Activated naive CD4-positive, alpha-beta T cell treated with anti-CD3 and anti-CD28 coated beads for 36 hours (primary cell): ENCODE measurements at regions of chr13 and their contacts with region 1.

Region 1: DNA sequence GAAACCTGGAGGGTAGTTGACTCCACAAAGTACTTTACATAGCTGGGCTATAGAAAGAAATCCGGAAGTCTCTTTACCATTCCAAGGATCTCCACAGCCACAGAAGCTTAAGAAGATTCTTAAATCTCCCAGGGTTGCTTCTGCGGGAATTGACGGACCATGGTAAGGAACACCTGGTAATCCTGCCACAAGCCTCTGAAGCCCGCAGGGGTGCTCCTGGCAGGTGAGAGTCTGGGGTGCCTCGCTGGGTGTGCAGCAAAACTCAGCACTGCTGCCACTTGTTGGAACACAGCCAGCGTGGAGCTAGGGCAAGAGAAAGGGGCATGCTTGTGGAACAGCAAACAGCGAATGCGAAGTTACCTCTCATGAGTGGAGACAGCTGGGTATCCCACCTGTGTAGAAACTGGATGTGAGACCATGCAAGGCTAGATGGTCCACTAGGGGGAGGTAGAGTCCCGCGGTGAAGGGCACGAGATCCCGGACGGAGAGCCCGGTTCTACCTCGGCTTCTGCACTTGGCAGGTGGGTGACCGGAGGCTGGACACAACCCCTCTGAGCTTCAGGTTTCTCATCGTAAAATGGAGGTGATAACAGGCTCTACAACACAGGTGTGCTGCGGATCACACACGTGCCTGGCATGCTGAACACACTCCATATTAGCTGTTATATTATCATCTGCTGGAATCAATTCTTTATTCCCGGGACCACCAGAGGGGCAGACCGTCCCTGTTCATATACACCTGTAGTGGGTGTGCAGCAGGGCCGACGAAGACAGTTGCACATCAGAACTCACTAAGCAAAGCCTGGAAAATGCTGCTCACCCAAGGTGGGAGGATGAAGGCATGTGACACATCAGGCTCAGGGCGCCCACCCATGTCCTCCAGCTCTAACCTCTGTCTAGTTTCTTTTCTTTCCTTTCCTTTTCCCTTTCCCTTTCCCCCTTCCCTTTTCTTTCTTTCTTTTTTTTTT is 24.1 kb upstream of the UBAC2 start:
- DNase-seq: peak; percentile 87
- H3K4me3 Mint-ChIP-seq: peak overlapping the region; percentile 48
- H3K27ac Mint-ChIP-seq: no peak overlapping the region
- H3K4me1 Mint-ChIP-seq: peaks cover 35% of the 10 kb centered on the region
- H3K27me3 Mint-ChIP-seq: no peaks in the 10 kb centered on the region

Region 2: DNA sequence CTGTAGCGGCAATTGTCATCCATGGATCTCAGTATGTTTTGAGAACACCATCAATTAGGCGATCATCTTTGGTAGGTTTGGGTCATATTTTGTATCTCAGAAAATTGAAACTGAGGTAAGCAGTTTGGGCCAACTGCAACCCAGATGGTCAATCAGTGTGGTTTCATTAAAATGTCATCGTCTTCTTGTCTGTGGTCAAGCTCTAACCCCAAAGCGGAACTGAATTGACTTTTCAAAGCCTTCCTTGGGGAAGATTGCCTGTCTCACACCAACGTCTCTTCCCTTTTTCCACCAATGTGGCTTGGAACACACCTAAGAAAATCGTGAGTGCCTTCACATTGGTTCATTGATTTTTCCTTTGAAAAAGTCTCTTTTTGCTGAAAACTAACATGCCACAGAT is 32.3 kb before region 1 on chr13:
- CTCF ChIA-PET with region 1: no interaction called
- intact Hi-C with region 1: no loop called
- DNase-seq: no peak
- H3K4me3 Mint-ChIP-seq: no peak overlapping the region
- H3K27ac Mint-ChIP-seq: no peak overlapping the region
- H3K4me1 Mint-ChIP-seq: no peaks in the 10 kb centered on the region
- H3K27me3 Mint-ChIP-seq: no peaks in the 10 kb centered on the region

Region 3: DNA sequence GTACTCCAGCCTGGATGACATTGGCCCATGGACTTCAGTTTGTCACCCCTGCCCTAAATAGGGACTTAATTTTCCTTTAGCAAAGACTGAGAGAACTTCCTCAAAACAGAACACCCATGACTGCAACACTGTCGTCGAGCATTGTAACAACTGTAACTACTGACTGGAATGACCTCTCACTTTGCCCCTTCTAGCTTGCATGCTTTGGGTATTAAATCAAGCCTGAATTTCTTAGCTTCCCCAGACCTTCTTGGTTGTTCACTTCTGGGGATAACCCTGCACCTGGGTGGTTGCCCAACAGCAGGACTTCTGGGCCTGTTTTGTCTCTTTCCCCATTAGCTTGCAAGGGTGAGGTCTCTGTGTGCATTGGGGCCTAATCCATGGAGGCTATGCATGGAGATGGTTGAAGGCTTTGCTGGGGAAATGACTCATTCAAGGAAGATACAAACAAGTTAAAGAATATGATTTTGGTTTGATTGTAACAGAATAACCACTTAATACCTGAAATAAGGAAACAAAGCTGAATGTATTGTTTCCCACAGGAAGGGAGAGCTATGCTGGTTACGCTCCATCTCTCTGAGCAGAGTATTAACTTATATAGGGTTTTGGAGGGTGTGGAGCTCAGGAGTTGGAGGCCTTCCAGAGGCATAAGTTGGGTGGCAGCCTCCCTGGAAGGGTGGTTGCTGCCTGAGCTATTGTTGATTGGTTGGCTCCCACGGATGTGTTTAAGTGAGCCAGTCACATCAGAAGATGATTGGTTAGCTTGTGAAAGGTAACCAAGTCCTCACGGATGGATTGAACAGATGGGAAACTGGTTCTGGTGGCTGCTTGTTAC is 10.6 kb before region 1 on chr13:
- CTCF ChIA-PET with region 1: interaction called, 10 read pairs
- intact Hi-C with region 1: no loop called
- DNase-seq: no peak
- H3K4me3 Mint-ChIP-seq: no peak overlapping the region
- H3K27ac Mint-ChIP-seq: no peak overlapping the region
- H3K4me1 Mint-ChIP-seq: no peaks in the 10 kb centered on the region
- H3K27me3 Mint-ChIP-seq: no peaks in the 10 kb centered on the region

Region 4: GRCh38 chr13:99192480-99192879 is 15.9 kb after region 1 on chr13:
- CTCF ChIA-PET with region 1: interaction called, 27 read pairs
- intact Hi-C with region 1: no loop called
- DNase-seq: no peak
- H3K4me3 Mint-ChIP-seq: no peak overlapping the region
- H3K27ac Mint-ChIP-seq: no peak overlapping the region
- H3K4me1 Mint-ChIP-seq: peaks cover 13% of the 10 kb centered on the region
- H3K27me3 Mint-ChIP-seq: no peaks in the 10 kb centered on the region

Region 5: GRCh38 chr13:99366075-99366987 is 189.7 kb after region 1 on chr13:
- CTCF ChIA-PET with region 1: interaction called, 3 read pairs
- intact Hi-C with region 1: loop called (anchors 2 kb)
- DNase-seq: peak; percentile 28
- H3K4me3 Mint-ChIP-seq: peak overlapping the region; percentile 17
- H3K27ac Mint-ChIP-seq: peak overlapping the region; percentile 48
- H3K4me1 Mint-ChIP-seq: peaks cover 87% of the 10 kb centered on the region
- H3K27me3 Mint-ChIP-seq: no peaks in the 10 kb centered on the region